AG04450 (cell line): ENCODE measurements at regions of chr17 and their contacts with region 1.

Region 1: GRCh38 chr17:75012346-75013091 is at the start of gene MRPL58:
- DNase-seq: peak; percentile 72
- H3K4me3 ChIP-seq: peak within 1 kb of the TSS; percentile 90
- H3K27ac ChIP-seq: peak within 1 kb of the TSS; percentile 97
- H3K27me3 ChIP-seq: no peaks in the 10 kb centered on the region
- CTCF ChIP-seq: peak; percentile 62
- polyA plus RNA-seq, gene MRPL58: 48.5 and 53.7 TPM in 2 replicates

Region 2: GRCh38 chr17:74898376-74898946 is 114.1 kb before region 1 on chr17:
- CTCF ChIA-PET with region 1: no interaction called
- POLR2A ChIA-PET with region 1: no interaction called
- DNase-seq: no peak
- H3K4me3 ChIP-seq: no peak overlapping the region
- H3K27ac ChIP-seq: no peak overlapping the region
- H3K27me3 ChIP-seq: peaks cover 60% of the 10 kb centered on the region
- CTCF ChIP-seq: no peak

Region 3: GRCh38 chr17:74987418-74987908 is 25.1 kb before region 1 on chr17 and contains the start of gene CDR2L:
- CTCF ChIA-PET with region 1: interaction called, 20 read pairs
- POLR2A ChIA-PET with region 1: interaction called, 21 read pairs
- DNase-seq: peak; percentile 75
- H3K4me3 ChIP-seq: peak within 1 kb of the TSS; percentile 78
- H3K27ac ChIP-seq: peak within 1 kb of the TSS; percentile 97
- H3K27me3 ChIP-seq: no peaks in the 10 kb centered on the region
- CTCF ChIP-seq: no peak
- polyA plus RNA-seq, gene CDR2L: 8.4 and 11.4 TPM in 2 replicates

Region 4: GRCh38 chr17:75024686-75025397 is 12.3 kb after region 1 on chr17:
- CTCF ChIA-PET with region 1: interaction called, 11 read pairs
- POLR2A ChIA-PET with region 1: interaction called, 7 read pairs
- DNase-seq: no peak
- H3K4me3 ChIP-seq: no peak overlapping the region
- H3K27ac ChIP-seq: no peak overlapping the region
- H3K27me3 ChIP-seq: no peaks in the 10 kb centered on the region
- CTCF ChIP-seq: no peak

Region 5: GRCh38 chr17:75034236-75034908 is 21.9 kb after region 1 on chr17:
- CTCF ChIA-PET with region 1: interaction called, 15 read pairs
- POLR2A ChIA-PET with region 1: interaction called, 30 read pairs
- DNase-seq: peak; percentile 73
- H3K4me3 ChIP-seq: peak overlapping the region; percentile 71
- H3K27ac ChIP-seq: peak overlapping the region; percentile 99
- H3K27me3 ChIP-seq: no peaks in the 10 kb centered on the region
- CTCF ChIP-seq: no peak